ENCODE measurements at regions of chr14 and their contacts with region 1.

Region 1: DNA sequence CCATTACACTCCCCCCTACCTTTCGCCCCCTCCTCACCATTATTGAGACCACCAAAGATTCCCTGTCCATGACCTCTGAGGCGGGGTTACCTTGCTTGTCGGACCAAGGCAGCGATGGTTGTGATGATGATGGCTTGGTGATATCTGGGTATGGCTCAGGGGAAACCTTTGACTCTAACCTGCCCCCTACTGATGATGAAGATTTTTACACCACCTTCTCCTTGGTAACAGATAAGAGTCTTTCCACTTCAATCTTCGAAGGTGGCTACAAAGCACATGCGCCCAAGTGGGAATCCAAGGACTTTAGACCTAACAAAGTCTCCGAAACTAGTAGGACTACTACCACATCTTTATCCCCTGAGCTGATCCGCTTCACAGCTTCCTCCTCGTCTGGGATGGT is 350.2 kb downstream of the DIO2 start:
- DNase-seq: no peak
- ATAC-seq: no peak
- H3K4me3 ChIP-seq: no peak overlapping the region
- H3K27ac ChIP-seq: no peak overlapping the region
- H3K4me1 ChIP-seq: no peaks in the 10 kb centered on the region
- H3K27me3 ChIP-seq: no peaks in the 10 kb centered on the region
- CTCF ChIP-seq: no peak
- EP300 ChIP-seq: no peak
- POLR2A ChIP-seq: no peak
- RAD21 ChIP-seq: no peak

Region 2: DNA sequence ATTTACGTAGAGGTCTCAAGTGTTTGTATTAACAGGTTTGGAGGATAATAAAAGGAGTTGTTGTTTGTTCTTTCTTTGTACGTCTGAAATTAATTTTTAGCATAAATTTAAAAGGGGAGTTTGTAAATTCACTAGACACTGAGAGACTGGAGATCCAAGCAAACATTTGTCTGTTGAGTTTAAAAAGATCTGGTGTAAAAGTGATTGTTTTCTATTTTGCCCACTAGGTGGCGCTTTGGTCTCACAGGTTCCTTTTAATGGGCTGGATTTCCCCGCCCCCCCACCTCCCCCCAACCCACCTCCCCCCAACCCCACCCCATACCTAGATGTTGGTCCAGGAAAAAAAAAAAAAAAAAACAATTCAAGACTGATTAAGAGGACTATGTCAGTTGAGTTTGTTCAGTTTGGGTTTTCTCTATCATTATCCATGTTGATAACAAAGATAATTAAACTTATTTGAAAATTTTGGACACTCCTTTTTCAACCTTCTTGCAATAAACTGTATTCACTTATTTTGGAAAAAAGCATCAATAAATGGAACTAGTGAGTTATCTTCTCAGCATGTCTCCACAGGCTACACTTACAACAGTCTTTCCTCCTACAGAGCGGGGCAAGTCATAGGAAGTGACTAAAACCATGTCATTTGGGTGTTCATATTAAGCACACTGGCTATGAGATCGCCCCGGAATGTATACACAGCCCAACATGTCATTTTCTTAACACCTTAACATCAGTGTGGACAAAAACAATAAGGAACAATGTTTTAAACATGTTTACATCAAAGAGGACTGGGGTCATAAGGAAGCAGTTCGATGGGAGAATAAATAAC is 849.8 kb before region 1 on chr14:
- CTCF ChIA-PET with region 1: no interaction called
- POLR2A ChIA-PET with region 1: no interaction called
- RAD21 ChIA-PET with region 1: no interaction called
- SMC1A ChIA-PET with region 1: no interaction called
- in situ Hi-C with region 1: no loop called
- intact Hi-C with region 1: loop called (anchors 5 kb)
- DNase-seq: no peak
- ATAC-seq: no peak
- H3K4me3 ChIP-seq: no peak overlapping the region
- H3K27ac ChIP-seq: no peak overlapping the region
- H3K4me1 ChIP-seq: no peaks in the 10 kb centered on the region
- H3K27me3 ChIP-seq: no peaks in the 10 kb centered on the region
- CTCF ChIP-seq: peak; percentile 18 to 51 (median 41); a peak in 4 of 6 replicates
- EP300 ChIP-seq: no peak
- POLR2A ChIP-seq: no peak
- RAD21 ChIP-seq: peak; percentile 62

Region 3: GRCh38 chr14:79758985-79759384 is 102.1 kb before region 1 on chr14:
- CTCF ChIA-PET with region 1: no interaction called
- POLR2A ChIA-PET with region 1: no interaction called
- RAD21 ChIA-PET with region 1: no interaction called
- SMC1A ChIA-PET with region 1: no interaction called
- in situ Hi-C with region 1: no loop called
- intact Hi-C with region 1: no loop called
- DNase-seq: no peak
- ATAC-seq: no peak
- H3K4me3 ChIP-seq: no peak overlapping the region
- H3K27ac ChIP-seq: no peak overlapping the region
- H3K4me1 ChIP-seq: no peaks in the 10 kb centered on the region
- H3K27me3 ChIP-seq: no peaks in the 10 kb centered on the region
- CTCF ChIP-seq: no peak
- EP300 ChIP-seq: no peak
- POLR2A ChIP-seq: no peak
- RAD21 ChIP-seq: no peak